CD4-positive, alpha-beta T cell (primary cell): ENCODE measurements at regions of chr7 and their contacts with region 1.

Region 1: GRCh38 chr7:831596-832166 is 595 bp upstream of the SUN1 start:
- DNase-seq: peak in 5 of 14 experiments; percentile 35 to 61 (median 58)
- ATAC-seq: peak; percentile 29
- H3K4me3 ChIP-seq: peak overlapping the region; percentile 36
- H3K4me3 Mint-ChIP-seq: peak overlapping the region; percentile 85
- H3K27ac ChIP-seq: peak overlapping the region; percentile 73 to 90
- H3K27ac Mint-ChIP-seq: peak overlapping the region; percentile 86
- H3K4me1 ChIP-seq: peaks cover 48% of the 10 kb centered on the region
- H3K4me1 Mint-ChIP-seq: peaks cover 58% of the 10 kb centered on the region
- H3K27me3 ChIP-seq: no peaks in the 10 kb centered on the region
- H3K27me3 Mint-ChIP-seq: no peaks in the 10 kb centered on the region
- CTCF ChIP-seq: no peak

Region 2: GRCh38 chr7:610531-611275 is 221.0 kb before region 1 on chr7:
- CTCF ChIA-PET with region 1: no interaction called
- POLR2A ChIA-PET with region 1: no interaction called
- intact Hi-C with region 1: no loop called
- DNase-seq: peak in 2 of 14 experiments; percentile 40 to 44
- ATAC-seq: peak; percentile 83
- H3K4me3 ChIP-seq: no peak overlapping the region
- H3K4me3 Mint-ChIP-seq: peak overlapping the region; percentile 59
- H3K27ac ChIP-seq: no peak overlapping the region
- H3K27ac Mint-ChIP-seq: peak overlapping the region; percentile 97
- H3K4me1 ChIP-seq: peaks cover 64% of the 10 kb centered on the region
- H3K4me1 Mint-ChIP-seq: peaks cover 60% of the 10 kb centered on the region
- H3K27me3 ChIP-seq: no peaks in the 10 kb centered on the region
- H3K27me3 Mint-ChIP-seq: no peaks in the 10 kb centered on the region
- CTCF ChIP-seq: no peak

Region 3: GRCh38 chr7:786472-787255 is 45.0 kb before region 1 on chr7:
- CTCF ChIA-PET with region 1: interaction called, 6 read pairs
- POLR2A ChIA-PET with region 1: interaction called, 4 read pairs
- intact Hi-C with region 1: loop called (anchors 1 kb)
- DNase-seq: peak; percentile 59 to 85 (median 68)
- ATAC-seq: peak; percentile 100
- H3K4me3 ChIP-seq: no peak overlapping the region
- H3K4me3 Mint-ChIP-seq: no peak overlapping the region
- H3K27ac ChIP-seq: no peak overlapping the region
- H3K27ac Mint-ChIP-seq: no peak overlapping the region
- H3K4me1 ChIP-seq: peaks cover 6% of the 10 kb centered on the region
- H3K4me1 Mint-ChIP-seq: no peaks in the 10 kb centered on the region
- H3K27me3 ChIP-seq: no peaks in the 10 kb centered on the region
- H3K27me3 Mint-ChIP-seq: no peaks in the 10 kb centered on the region
- CTCF ChIP-seq: peak; percentile 74

Region 4: DNA sequence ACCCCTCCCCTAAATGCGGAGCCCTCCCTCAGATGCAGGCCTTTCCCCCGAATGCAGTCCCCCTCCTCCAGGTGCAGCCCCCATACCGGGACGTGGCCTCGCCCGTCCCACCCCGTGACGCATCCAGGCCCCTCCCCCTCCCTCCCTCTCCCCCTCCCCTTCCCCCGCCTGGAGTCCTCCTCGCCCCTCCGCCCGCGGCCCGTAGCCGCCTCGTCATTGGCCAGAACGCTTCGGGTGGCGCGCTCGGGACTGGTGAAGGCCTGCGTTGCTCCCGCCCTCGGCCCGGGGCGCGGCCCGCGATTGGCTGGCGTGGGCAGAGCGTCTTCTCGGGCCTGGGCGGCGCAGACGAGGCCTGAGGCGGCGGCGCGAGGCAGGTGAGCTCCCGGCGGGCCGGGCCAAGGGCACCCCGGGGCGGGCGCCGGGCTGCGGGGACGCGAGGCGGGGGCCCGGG is 15.4 kb before region 1 on chr7:
- CTCF ChIA-PET with region 1: interaction called, 8 read pairs
- POLR2A ChIA-PET with region 1: interaction called, 34 read pairs
- intact Hi-C with region 1: loop called (anchors 1 kb)
- DNase-seq: peak; percentile 95 to 99 (median 97)
- ATAC-seq: peak; percentile 94
- H3K4me3 ChIP-seq: peak overlapping the region; percentile 64
- H3K4me3 Mint-ChIP-seq: peak overlapping the region; percentile 85
- H3K27ac ChIP-seq: no peak overlapping the region
- H3K27ac Mint-ChIP-seq: peak overlapping the region; percentile 85
- H3K4me1 ChIP-seq: peaks cover 50% of the 10 kb centered on the region
- H3K4me1 Mint-ChIP-seq: peaks cover 67% of the 10 kb centered on the region
- H3K27me3 ChIP-seq: no peaks in the 10 kb centered on the region
- H3K27me3 Mint-ChIP-seq: no peaks in the 10 kb centered on the region
- CTCF ChIP-seq: no peak

Region 5: DNA sequence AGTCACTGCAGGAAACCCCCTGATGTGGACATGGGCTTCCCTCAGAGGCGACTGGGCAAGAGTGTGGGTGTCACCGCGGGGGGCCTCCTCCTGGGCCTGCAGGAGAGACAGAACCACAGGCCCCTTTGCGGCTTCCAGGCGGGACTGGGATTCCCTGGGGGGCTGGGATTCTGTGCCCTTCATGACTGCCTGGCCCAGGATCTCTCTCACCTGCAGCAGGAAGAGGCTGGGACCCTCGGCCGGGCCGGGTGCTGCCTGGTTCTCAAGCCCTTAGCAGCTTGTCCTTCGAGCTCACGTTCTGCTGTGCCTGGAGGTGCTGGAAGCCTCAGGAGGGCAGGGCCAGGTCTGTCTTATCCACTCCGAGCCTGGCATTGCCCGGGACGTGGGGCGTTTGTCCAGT is 12.4 kb after region 1 on chr7:
- CTCF ChIA-PET with region 1: no interaction called
- POLR2A ChIA-PET with region 1: no interaction called
- intact Hi-C with region 1: no loop called
- DNase-seq: no peak
- ATAC-seq: no peak
- H3K4me3 ChIP-seq: no peak overlapping the region
- H3K4me3 Mint-ChIP-seq: no peak overlapping the region
- H3K27ac ChIP-seq: no peak overlapping the region
- H3K27ac Mint-ChIP-seq: no peak overlapping the region
- H3K4me1 ChIP-seq: no peaks in the 10 kb centered on the region
- H3K4me1 Mint-ChIP-seq: no peaks in the 10 kb centered on the region
- H3K27me3 ChIP-seq: no peaks in the 10 kb centered on the region
- H3K27me3 Mint-ChIP-seq: no peaks in the 10 kb centered on the region
- CTCF ChIP-seq: no peak

Region 6: DNA sequence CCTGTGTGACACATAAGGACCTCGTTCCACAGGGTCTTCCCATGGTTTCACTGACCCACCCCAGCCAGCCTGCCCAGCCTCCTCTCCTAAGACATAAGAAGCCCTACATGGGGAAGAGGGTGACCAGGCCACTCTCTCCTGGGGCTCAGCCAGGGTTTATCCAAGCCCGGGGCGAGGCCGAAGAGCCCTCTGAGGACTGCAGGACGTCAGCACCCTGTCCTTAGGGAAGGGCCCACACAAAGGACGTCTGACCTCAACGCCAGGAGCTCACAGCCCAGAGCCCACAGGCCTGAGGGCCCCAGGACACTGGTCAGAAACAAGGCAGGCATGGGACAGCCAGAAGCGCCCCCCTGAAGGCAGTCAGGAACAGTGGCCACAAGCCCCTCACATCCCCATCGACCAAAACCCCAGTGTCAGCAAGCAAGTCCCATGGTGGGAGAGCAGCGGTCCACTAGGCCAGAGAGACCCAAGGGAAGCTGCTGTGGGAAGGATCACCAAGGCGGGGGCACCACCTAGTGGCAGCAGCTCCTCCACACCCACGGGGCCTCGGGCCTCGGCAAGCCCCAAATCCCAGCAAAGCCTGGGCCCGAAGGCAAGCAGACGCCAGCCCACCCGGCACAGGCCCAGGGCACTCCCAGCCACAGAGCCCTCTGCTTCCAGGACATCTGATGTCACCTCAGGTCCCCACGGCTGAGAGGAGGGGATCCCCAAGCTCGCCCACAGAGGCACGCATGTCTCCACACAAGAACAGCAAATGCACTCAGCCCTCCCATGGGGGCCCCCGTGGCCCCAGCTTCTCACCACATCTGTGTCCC is 1377.7 kb after region 1 on chr7:
- CTCF ChIA-PET with region 1: no interaction called
- POLR2A ChIA-PET with region 1: no interaction called
- intact Hi-C with region 1: no loop called
- DNase-seq: peak; percentile 11 to 61 (median 32)
- ATAC-seq: peak; percentile 61
- H3K4me3 ChIP-seq: no peak overlapping the region
- H3K4me3 Mint-ChIP-seq: no peak overlapping the region
- H3K27ac ChIP-seq: no peak overlapping the region
- H3K27ac Mint-ChIP-seq: no peak overlapping the region
- H3K4me1 ChIP-seq: peaks cover 2% of the 10 kb centered on the region
- H3K4me1 Mint-ChIP-seq: peaks cover under 1% of the 10 kb centered on the region
- H3K27me3 ChIP-seq: no peaks in the 10 kb centered on the region
- H3K27me3 Mint-ChIP-seq: no peaks in the 10 kb centered on the region
- CTCF ChIP-seq: peak; percentile 33